Breast epithelium (tissue), 4 donors: ENCODE measurements at regions of chr14 and their contacts with region 1.

Region 1: DNA sequence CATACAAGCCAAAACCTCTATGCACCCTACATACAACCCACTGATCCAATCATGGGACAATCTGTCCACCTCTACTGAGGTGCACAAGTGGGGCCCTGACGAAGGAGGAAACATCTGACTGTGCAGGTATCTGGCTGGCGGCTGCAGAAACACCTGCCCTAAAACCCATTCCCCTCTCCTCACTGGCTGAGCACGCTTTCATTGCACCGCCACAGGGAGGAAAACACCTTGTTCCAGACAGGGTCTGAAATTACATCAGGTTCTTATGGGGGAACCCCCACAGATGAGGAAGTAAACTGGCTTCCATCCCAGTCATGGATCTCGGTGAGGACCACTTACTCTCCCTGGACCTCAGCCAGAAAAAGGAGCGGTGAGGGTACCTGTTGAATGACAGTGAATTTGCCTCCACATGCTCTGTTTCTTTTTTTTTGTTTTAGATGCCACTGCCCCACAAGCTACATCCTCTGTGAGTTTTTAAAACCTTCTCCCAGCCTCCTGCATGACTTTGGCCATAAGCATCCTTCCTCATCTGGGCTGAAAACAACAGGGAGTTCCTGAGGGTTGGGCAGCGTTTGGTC is 23.8 kb upstream of the DGLUCY start:
- DNase-seq: no peak
- H3K4me3 ChIP-seq: no peak overlapping the region
- H3K27ac ChIP-seq: no peak overlapping the region
- H3K4me1 ChIP-seq: peaks cover 0 to 3% of the 10 kb centered on the region in 2 donors
- H3K27me3 ChIP-seq: no peaks in the 10 kb centered on the region
- CTCF ChIP-seq: no peak
- POLR2A ChIP-seq: no peak

Region 2: DNA sequence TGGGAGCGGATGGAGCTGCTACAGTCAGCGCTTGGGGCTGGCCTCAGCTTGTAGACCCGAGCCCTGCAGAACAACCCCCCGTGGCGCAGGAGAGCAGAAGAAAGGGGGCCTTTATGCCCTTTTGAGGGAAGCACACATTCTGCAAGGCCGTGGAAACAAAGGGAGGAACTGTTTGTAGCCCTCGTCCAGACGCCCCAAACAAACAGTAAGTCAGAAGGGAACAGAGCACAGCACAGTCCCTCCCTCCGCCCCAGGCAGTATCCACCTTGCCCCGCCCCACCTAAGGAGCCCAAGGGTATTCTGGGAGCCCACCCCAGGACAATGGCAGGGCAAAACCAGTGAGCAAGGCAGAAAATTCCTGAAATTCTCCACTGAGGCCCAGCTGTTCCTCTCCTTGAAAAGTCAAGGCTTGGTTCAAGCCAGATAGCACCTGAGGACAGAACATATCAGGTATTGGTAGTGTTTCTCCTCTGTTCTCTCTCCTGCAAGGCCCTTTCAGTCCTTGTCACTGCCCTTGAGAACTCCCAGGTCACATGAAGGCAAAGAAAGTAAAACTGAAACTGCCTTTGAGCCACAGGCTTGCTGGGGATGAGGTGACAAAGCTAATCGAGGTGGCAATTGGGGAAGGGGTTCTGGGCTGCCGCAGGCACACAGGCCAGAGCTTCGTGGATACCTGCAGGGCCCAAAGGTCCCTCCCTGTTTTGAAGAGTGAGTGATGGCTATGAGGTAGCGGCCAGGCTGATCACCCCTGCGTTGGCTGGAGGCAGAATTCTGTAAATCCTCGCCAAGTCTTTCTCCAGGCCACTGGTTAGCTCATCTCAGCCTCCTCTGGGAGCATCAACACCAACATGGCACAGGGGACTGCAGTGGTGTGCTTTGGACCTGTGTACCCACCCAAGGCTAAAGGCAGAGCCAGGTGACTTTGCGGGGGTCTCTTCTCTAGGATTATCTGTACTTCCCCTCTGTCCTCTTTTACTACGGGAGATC is 24.3 kb after region 1 on chr14:
- intact Hi-C with region 1: no loop called
- DNase-seq: peak; percentile 66 to 68
- H3K4me3 ChIP-seq: peak overlapping the region; percentile 55 to 77 (median 59)
- H3K27ac ChIP-seq: peak overlapping the region; percentile 95 to 98
- H3K4me1 ChIP-seq: peaks cover 9 to 10% of the 10 kb centered on the region in 2 donors
- H3K27me3 ChIP-seq: no peaks in the 10 kb centered on the region
- CTCF ChIP-seq: no peak
- POLR2A ChIP-seq: no peak

Region 3: DNA sequence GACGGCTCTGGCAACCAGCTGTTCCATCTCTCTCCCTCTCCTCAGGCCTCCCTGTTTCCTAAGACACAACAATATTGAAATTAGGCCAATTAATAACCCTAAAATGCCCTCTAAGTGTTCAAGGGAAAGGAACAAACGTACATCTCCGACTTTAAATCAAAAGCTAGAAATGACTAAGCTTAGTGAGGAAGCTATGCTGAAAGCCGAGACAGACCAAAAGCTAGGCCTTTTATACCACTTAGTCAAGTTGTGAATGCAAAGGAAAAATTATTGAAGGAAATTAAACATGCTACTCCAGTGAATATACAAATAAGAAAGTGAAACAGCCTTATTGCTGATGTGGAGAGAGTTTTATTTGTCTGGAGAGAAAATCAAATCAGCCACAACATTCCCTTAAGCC is 703.7 kb after region 1 on chr14:
- intact Hi-C with region 1: loop called (anchors 5 kb)
- DNase-seq: no peak
- H3K4me3 ChIP-seq: no peak overlapping the region
- H3K27ac ChIP-seq: no peak overlapping the region
- H3K4me1 ChIP-seq: no peaks in the 10 kb centered on the region
- H3K27me3 ChIP-seq: no peaks in the 10 kb centered on the region
- CTCF ChIP-seq: no peak
- POLR2A ChIP-seq: no peak